Mammary epithelial cell (primary cell): ENCODE measurements at regions of chr1 and their contacts with region 1.

Region 1: GRCh38 chr1:90802622-90803021 is 85.5 kb upstream of the BARHL2 start:
- DNase-seq: no peak
- H3K4me3 ChIP-seq: no peak overlapping the region
- H3K27ac ChIP-seq: no peak overlapping the region
- H3K4me1 ChIP-seq: no peaks in the 10 kb centered on the region
- H3K27me3 ChIP-seq: peaks cover 2% of the 10 kb centered on the region
- CTCF ChIP-seq: no peak

Region 2: DNA sequence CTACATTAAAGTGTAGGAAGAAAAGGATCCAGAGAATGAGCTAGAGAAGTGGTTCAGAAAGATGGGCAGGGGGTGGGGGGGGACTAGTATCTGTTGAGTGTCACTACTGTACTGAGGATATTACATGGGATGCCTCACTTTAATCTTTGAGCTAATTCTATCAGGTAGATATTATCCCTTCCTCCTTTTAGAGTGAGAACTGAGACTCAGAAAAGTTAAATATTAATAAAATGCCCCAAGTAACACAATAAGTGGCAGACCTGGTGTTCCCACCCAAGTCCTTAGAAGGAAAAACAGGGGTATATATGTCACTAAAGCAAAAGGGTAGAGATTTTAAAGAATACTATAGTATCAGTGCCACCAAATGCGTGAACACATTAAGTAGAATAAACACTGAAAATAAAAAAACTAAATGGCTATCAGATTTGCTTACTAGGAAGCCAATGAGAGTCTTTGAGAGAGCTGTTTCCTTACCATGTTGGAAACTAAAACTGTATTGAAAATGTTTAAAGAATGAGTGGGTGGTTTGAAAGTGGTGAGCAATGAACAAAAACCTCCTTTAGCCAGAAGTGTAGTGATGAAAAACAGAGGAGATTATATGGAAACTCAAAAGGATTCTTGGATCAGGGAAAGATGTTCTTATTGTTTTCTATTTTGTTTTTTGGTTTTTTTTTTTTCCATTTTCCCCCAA is 316.3 kb before region 1 on chr1:
- CTCF ChIA-PET with region 1: interaction called, 16 read pairs
- dilution Hi-C with region 1: no loop called
- in situ Hi-C with region 1: no loop called
- intact Hi-C with region 1: no loop called
- DNase-seq: no peak
- H3K4me3 ChIP-seq: no peak overlapping the region
- H3K27ac ChIP-seq: no peak overlapping the region
- H3K4me1 ChIP-seq: no peaks in the 10 kb centered on the region
- H3K27me3 ChIP-seq: no peaks in the 10 kb centered on the region
- CTCF ChIP-seq: no peak